Esophagus muscularis mucosa (tissue), 4 donors: ENCODE measurements at regions of chr2 and their contacts with region 1.

Region 1: GRCh38 chr2:226799181-226799975 is at the start of gene IRS1:
- DNase-seq: no peak
- H3K4me3 ChIP-seq: peak within 1 kb of the TSS; percentile 70 to 95 (median 86)
- H3K27ac ChIP-seq: peak within 1 kb of the TSS; percentile 94 to 96 (median 94)
- H3K4me1 ChIP-seq: peaks cover 40 to 70% (median 67%) of the 10 kb centered on the region in 4 donors
- H3K27me3 ChIP-seq: peaks cover 0 to 16% (median 0%) of the 10 kb centered on the region in 4 donors
- CTCF ChIP-seq: peak in 1 of 3 experiments; percentile 69
- EP300 ChIP-seq: no peak
- POLR2A ChIP-seq: no peak
- total RNA-seq, gene IRS1: 27.8 to 47.6 (median 32.8) TPM

Region 2: GRCh38 chr2:225668606-225669266 is 1130.6 kb before region 1 on chr2:
- intact Hi-C with region 1: loop called (anchors 2 kb)
- DNase-seq: no peak
- H3K4me3 ChIP-seq: no peak overlapping the region
- H3K27ac ChIP-seq: no peak overlapping the region
- H3K4me1 ChIP-seq: peaks cover 0 to 11% (median 3%) of the 10 kb centered on the region in 4 donors
- H3K27me3 ChIP-seq: no peaks in the 10 kb centered on the region
- CTCF ChIP-seq: peak; percentile 64 to 79 (median 65)
- EP300 ChIP-seq: no peak
- POLR2A ChIP-seq: no peak

Region 3: DNA sequence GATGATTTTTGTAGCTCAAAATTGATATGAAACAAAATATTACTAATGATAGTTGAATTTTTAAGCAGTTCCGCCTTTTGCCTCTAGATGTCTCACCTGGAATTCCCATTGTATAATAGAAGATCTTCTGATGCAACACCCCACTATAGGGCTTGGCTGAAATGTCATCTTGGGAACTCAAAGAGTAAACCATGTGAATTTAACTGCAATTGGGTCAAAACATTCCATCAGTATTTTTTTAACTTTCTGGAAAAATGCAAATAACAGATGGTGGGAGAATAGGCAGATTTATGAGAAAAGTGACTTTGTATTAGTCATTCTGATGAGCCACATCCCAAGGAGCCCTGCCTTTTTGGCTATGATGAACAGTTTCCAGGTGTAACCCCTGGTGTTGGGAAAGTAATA is 909.9 kb before region 1 on chr2:
- intact Hi-C with region 1: loop called (anchors 2 kb)
- DNase-seq: no peak
- H3K4me3 ChIP-seq: no peak overlapping the region
- H3K27ac ChIP-seq: no peak overlapping the region
- H3K4me1 ChIP-seq: peaks cover 0 to 13% (median 8%) of the 10 kb centered on the region in 4 donors
- H3K27me3 ChIP-seq: no peaks in the 10 kb centered on the region
- CTCF ChIP-seq: peak; percentile 77 to 79 (median 77)
- EP300 ChIP-seq: no peak
- POLR2A ChIP-seq: no peak

Region 4: GRCh38 chr2:226030788-226031646 is 768.4 kb before region 1 on chr2:
- intact Hi-C with region 1: loop called (anchors 10 kb)
- DNase-seq: no peak
- H3K4me3 ChIP-seq: peak overlapping the region; percentile 51 to 66 (median 62)
- H3K27ac ChIP-seq: peak overlapping the region; percentile 53 to 70 (median 63)
- H3K4me1 ChIP-seq: peaks cover 18 to 28% (median 24%) of the 10 kb centered on the region in 4 donors
- H3K27me3 ChIP-seq: no peaks in the 10 kb centered on the region
- CTCF ChIP-seq: no peak
- EP300 ChIP-seq: no peak
- POLR2A ChIP-seq: no peak

Region 5: GRCh38 chr2:226215902-226216503 is 583.4 kb before region 1 on chr2:
- intact Hi-C with region 1: loop called (anchors 2 kb)
- DNase-seq: no peak
- H3K4me3 ChIP-seq: no peak overlapping the region
- H3K27ac ChIP-seq: no peak overlapping the region
- H3K4me1 ChIP-seq: peaks cover 13 to 23% (median 16%) of the 10 kb centered on the region in 4 donors
- H3K27me3 ChIP-seq: no peaks in the 10 kb centered on the region
- CTCF ChIP-seq: peak; percentile 50 to 70 (median 60)
- EP300 ChIP-seq: no peak
- POLR2A ChIP-seq: no peak

Region 6: GRCh38 chr2:226746196-226746800 is 53.1 kb before region 1 on chr2:
- intact Hi-C with region 1: loop called (anchors 5 kb)
- DNase-seq: no peak
- H3K4me3 ChIP-seq: no peak overlapping the region
- H3K27ac ChIP-seq: no peak overlapping the region
- H3K4me1 ChIP-seq: peaks cover 30 to 47% (median 34%) of the 10 kb centered on the region in 4 donors
- H3K27me3 ChIP-seq: no peaks in the 10 kb centered on the region
- CTCF ChIP-seq: no peak
- EP300 ChIP-seq: no peak
- POLR2A ChIP-seq: no peak

Region 7: DNA sequence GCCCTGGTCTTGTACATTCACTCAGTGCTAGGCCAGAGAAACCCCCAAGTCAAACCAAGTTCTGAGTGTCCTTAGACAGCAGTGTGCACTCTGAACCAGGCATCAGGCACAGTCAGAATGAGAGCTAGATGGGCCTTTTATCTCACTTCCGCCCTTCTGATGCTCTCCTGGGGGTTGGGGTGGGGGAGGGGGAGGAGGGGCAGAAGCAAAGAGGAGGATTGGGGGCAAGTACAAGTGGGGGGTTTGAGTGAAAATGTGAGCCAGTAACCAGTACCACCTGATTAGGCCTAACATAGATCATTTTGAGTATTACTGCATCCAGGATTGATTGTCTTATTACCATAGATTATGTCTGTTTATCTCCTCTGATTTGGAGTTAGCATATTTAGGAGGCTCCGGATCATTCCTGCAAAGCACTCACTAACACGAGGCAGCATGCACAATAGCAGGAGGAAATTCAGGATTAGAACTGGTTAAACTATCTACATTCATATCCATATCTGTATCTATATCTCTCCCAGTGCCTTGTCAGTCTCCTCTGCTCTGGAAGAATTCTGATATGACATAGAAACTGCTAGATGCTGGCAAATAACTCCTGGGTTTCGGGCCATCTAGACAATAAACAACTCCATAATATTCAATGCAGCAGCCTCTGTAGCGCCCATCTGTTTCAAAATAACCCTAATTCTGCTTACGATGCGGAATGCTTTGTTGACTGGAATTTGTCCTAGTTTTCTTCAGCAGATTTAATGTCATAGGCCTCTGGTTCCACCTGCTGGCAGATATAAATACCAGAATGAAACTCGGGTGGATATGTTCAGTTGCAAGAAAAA is 185.6 kb after region 1 on chr2:
- intact Hi-C with region 1: loop called (anchors 2 kb)
- DNase-seq: no peak
- H3K4me3 ChIP-seq: no peak overlapping the region
- H3K27ac ChIP-seq: peak overlapping the region in 2 of 4 donors; percentile 0 to 27
- H3K4me1 ChIP-seq: peaks cover 6 to 15% (median 13%) of the 10 kb centered on the region in 4 donors
- H3K27me3 ChIP-seq: no peaks in the 10 kb centered on the region
- CTCF ChIP-seq: peak; percentile 75 to 78 (median 76)
- EP300 ChIP-seq: no peak
- POLR2A ChIP-seq: no peak